Endothelial cell of umbilical vein (primary cell): ENCODE measurements at regions of chr10 and their contacts with region 1.

Region 1: GRCh38 chr10:99809931-99810615 is 27.6 kb downstream of the ABCC2 start:
- DNase-seq: no peak
- H3K4me3 ChIP-seq: no peak overlapping the region
- H3K27ac ChIP-seq: no peak overlapping the region
- H3K4me1 ChIP-seq: no peaks in the 10 kb centered on the region
- H3K27me3 ChIP-seq: no peaks in the 10 kb centered on the region
- CTCF ChIP-seq: no peak
- POLR2A ChIP-seq: no peak

Region 2: DNA sequence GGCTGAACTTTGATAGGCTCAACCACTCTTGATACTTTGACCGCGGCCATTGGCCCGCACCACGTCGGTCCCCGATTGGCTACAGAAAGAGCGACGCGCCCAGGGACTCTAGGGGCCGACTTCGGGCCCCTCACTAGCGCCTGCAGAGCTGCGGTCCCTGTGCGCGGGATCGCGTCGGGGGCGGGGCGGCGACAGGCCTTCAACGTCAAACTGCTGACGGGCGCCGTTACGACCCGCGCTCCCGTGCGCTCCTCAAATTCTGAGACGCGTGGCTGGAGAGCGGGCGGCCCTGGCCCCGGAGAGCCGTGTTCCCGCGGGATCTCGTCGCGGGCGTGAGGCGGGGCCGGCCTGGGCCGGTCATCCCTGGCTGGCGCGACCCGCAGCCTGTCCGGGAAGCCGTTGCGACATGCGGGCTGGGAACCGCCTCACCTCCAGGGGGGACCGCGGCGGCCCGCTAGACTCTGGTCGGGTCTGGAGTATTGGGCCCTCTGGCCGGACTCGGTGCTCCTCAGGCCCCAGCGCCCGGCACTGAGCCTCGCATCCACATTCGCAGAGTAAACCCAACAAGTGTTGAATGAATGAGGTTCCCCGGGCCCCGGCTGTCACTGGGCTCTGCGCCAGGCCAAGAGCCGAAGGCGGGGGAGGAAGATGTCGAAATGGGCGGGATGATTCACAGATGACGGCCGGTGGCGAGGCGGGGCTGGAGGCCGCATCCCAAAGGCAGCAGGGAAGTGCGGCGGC is 189.2 kb before region 1 on chr10:
- CTCF ChIA-PET with region 1: no interaction called
- POLR2A ChIA-PET with region 1: no interaction called
- dilution Hi-C with region 1: no loop called
- intact Hi-C with region 1: no loop called
- DNase-seq: peak; percentile 94
- H3K4me3 ChIP-seq: peak overlapping the region; percentile 24 to 57 (median 44)
- H3K27ac ChIP-seq: peak overlapping the region; percentile 93
- H3K4me1 ChIP-seq: peaks cover 21% of the 10 kb centered on the region
- H3K27me3 ChIP-seq: no peaks in the 10 kb centered on the region
- CTCF ChIP-seq: no peak
- POLR2A ChIP-seq: no peak

Region 3: GRCh38 chr10:99758211-99758891 is 51.7 kb before region 1 on chr10:
- CTCF ChIA-PET with region 1: no interaction called
- POLR2A ChIA-PET with region 1: no interaction called
- dilution Hi-C with region 1: loop called (anchors 10 kb)
- intact Hi-C with region 1: no loop called
- DNase-seq: no peak
- H3K4me3 ChIP-seq: no peak overlapping the region
- H3K27ac ChIP-seq: no peak overlapping the region
- H3K4me1 ChIP-seq: no peaks in the 10 kb centered on the region
- H3K27me3 ChIP-seq: no peaks in the 10 kb centered on the region
- CTCF ChIP-seq: no peak
- POLR2A ChIP-seq: no peak